Activated T-helper 1 cell treated with anti-CD3 and anti-CD28 coated beads, Interleukin-12 subunit alpha, Interleukin-12 subunit beta, Interleukin-2, Interleukin-4 antibody, amounts not matched to agents 30 ng/mL and 10 ng/mL and 1 ng/mL, durations not matched to agents 14 hours and 24 hours and 36 hours (primary cell): ENCODE measurements at regions of chr19 and their contacts with region 1.

Region 1: GRCh38 chr19:43826787-43827754 is at the start of gene ZNF283:
- DNase-seq: peak; percentile 77
- H3K4me3 Mint-ChIP-seq: peak within 1 kb of the TSS; percentile 86
- H3K27ac Mint-ChIP-seq: peak within 1 kb of the TSS; percentile 68
- H3K4me1 Mint-ChIP-seq: peaks cover 19% of the 10 kb centered on the region
- H3K27me3 Mint-ChIP-seq: peaks cover 11% of the 10 kb centered on the region
- total RNA-seq, gene ZNF283: 4.0 and 4.8 TPM in 2 replicates

Region 2: GRCh38 chr19:43798546-43799409 is 28.3 kb before region 1 on chr19:
- intact Hi-C with region 1: no loop called
- DNase-seq: peak; percentile 34
- H3K4me3 Mint-ChIP-seq: peak overlapping the region; percentile 72
- H3K27ac Mint-ChIP-seq: peak overlapping the region; percentile 38
- H3K4me1 Mint-ChIP-seq: peaks cover 6% of the 10 kb centered on the region
- H3K27me3 Mint-ChIP-seq: peaks cover 14% of the 10 kb centered on the region

Region 3: DNA sequence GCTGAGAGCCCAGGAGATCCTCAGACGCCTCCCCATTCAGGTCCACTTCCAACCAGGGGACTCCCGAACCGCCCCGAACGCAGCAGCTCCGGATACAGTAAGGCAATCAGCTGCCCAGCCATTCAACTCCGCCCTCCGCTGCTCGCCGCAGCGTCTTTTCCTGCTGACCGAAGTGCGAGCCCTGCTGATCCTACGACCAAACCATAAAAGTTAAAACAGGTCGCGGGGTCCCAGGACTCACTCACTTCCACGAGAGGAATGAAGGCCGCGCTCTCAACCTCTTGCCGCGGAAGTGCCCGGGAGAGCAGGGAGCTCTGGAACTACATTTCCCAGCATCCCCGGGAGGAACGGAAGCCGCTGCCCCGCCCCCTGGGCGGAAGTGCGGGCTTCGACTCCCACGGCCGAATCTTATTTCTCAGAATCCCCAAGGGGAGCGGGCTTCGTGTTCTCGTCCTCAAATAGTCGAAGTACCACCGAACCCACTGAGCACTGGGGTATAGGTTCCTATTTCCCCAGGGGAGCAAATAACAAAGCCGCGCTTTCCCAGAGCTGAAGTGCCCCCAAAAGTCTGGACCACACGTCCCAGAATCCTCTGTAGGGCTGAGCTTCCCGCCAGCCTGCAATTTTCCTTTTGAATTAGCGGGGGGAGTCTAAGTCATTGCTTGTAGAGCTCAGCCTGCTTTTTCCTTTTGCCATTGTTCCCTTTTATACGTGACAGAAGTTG is 108.1 kb after region 1 on chr19 and contains the start of gene ZNF45:
- intact Hi-C with region 1: loop called (anchors 1 kb)
- DNase-seq: peak; percentile 81
- H3K4me3 Mint-ChIP-seq: peak within 1 kb of the TSS; percentile 95
- H3K27ac Mint-ChIP-seq: peak within 1 kb of the TSS; percentile 83
- H3K4me1 Mint-ChIP-seq: peaks cover 20% of the 10 kb centered on the region
- H3K27me3 Mint-ChIP-seq: no peaks in the 10 kb centered on the region
- total RNA-seq, gene ZNF45: 11.5 and 13.1 TPM in 2 replicates

Region 4: DNA sequence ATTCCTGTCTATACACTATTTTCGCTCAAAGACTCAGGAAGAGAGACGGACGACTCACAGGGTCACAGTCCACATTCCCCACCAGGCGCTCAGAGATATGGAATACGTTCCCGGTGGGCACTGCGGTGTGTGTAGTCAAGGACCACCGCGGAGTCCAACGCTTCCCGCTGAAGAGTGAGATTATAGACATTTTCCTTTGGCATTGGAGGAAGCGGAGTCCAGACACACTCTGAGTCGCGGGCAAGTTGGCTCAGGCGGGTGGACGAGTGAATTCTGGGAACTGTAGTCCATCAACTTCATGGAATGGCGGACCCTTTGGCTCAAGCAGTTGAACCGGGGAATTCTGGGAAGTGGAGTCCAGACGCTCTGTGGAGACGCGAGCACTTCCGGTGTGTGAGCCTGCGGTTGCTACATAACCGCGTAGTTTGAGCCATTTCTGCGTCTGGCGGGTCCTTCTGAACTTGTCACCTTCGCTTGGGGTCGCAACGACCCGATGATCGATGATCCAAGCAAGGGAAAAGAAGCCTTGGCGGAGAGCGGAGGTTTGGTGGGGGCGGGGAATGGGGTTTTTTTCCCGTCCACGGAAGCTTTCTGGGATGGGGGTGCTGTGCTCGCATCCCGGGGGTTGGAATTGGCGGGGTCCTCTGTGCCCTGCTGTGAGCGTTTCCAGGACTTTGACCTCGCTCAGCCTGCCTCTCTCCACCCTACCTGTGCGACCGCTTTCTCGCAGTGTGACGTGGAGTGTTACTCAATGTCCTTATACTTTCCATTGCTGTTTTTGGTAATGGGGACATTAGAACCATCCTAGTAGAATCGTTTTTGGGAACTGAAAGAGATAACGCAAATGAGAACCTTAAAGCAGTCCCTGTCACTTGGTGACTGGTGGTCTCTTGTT is 175.7 kb after region 1 on chr19 and contains the start of gene ZNF230:
- intact Hi-C with region 1: loop called (anchors 1 kb)
- DNase-seq: peak; percentile 78
- H3K4me3 Mint-ChIP-seq: peak within 1 kb of the TSS; percentile 98
- H3K27ac Mint-ChIP-seq: peak within 1 kb of the TSS; percentile 95
- H3K4me1 Mint-ChIP-seq: peaks cover 21% of the 10 kb centered on the region
- H3K27me3 Mint-ChIP-seq: no peaks in the 10 kb centered on the region
- total RNA-seq, gene ZNF230: 4.0 and 4.3 TPM in 2 replicates

Region 5: DNA sequence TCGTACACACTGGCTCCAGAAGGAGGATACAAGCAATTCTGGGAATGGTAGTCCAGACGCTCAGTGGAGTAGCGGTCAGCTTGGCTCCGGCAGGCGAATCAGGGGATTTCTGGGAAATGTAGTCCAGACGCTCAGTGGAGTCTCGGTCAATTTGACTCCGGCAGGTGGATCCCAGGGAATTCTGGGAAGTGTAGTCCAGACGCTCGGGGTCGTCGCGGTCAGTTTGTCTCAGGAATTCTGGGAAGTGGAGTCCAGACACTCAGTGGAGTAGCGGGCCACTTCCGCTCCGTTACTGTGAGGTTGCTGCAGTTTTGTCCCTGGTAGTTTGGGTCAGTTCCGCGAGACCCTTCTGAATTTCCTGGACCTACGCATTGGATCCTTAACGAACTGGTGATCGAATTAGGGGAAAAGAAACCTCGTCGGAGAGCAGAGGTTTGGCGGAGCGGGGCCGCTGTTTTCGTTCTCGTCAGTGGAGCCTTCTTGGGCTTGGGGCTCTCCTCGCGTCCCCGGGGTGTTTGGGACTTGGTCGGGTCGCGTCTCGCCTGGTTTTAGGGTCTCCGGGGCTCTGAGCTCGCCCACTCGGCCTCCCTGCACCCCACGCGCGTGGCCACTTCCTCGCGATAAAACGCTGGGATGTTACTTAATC is 286.2 kb after region 1 on chr19 and contains the start of gene ZNF225:
- intact Hi-C with region 1: loop called (anchors 1 kb)
- DNase-seq: peak; percentile 81
- H3K4me3 Mint-ChIP-seq: peak within 1 kb of the TSS; percentile 100
- H3K27ac Mint-ChIP-seq: peak within 1 kb of the TSS; percentile 88
- H3K4me1 Mint-ChIP-seq: peaks cover 30% of the 10 kb centered on the region
- H3K27me3 Mint-ChIP-seq: no peaks in the 10 kb centered on the region
- total RNA-seq, gene ZNF225: 3.8 and 5.0 TPM in 2 replicates

Region 6: DNA sequence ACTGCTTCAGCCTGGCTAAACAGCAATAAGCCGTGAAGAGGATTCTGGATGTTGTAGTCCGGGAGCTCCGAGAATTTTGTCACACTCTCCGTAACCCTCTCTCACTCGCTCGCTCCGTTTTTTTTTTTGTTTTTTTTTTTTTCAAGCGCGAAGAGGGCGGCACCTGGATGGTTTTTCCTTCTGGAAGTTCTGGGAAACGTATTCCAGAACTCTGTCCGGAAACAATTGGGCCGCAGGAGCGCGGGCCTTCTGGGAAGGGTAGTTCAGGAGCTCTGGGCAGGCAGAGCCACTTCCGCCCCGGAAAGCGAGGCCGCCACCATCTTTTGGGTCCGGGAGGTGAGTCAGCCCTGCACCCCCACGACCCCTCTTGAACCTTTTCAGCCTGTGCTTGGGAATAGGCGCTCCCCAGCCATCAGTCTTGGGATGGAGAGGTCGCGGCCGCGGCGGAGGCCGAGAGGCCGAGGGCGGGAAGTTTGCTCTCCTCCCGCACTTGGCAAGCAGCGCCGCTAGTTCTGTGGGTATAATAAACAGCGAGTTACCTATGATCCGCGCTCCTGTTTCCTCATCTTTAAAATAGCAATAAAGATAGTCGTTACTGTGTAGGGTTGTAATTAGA is 385.3 kb after region 1 on chr19 and contains the start of gene ZNF227:
- intact Hi-C with region 1: loop called (anchors 1 kb)
- DNase-seq: peak; percentile 70
- H3K4me3 Mint-ChIP-seq: peak within 1 kb of the TSS; percentile 89
- H3K27ac Mint-ChIP-seq: peak within 1 kb of the TSS; percentile 79
- H3K4me1 Mint-ChIP-seq: peaks cover 27% of the 10 kb centered on the region
- H3K27me3 Mint-ChIP-seq: no peaks in the 10 kb centered on the region
- total RNA-seq, gene ZNF227: 21.7 and 22.6 TPM in 2 replicates